ENCODE measurements at regions of chr6 and their contacts with region 1.

Region 1: GRCh38 chr6:33276864-33277662 is at the start of gene B3GALT4:
- DNase-seq: peak; percentile 72 to 84 (median 81)
- H3K4me3 ChIP-seq: peak within 1 kb of the TSS; percentile 59 to 88 (median 72)
- H3K27ac ChIP-seq: peak within 1 kb of the TSS; percentile 50 to 77
- H3K4me1 ChIP-seq: peaks cover 7 to 73% (median 63%) of the 10 kb centered on the region in 4 experiments
- H3K27me3 ChIP-seq: no peaks in the 10 kb centered on the region

Region 2: DNA sequence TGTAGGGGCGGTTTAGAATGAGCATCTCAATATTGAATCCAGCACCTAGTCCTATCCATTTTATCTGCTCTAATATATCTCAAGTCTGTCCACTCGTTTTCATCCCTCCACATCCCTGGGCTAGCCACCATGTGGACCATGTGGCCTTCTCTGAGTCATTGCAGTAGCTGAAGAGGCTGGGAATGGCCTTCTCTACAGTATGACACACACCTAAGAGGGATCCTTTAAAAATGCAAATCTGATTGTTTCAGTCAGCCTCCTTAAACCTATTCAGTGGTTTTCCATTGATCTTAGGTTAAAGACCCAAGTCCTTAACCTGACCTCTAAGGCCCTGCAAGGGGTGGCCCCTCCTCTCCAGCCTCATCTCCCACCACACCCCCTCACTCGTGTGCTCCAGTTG is 59.4 kb before region 1 on chr6:
- CTCF ChIA-PET with region 1: no interaction called
- POLR2A ChIA-PET with region 1: no interaction called
- DNase-seq: no peak
- H3K4me3 ChIP-seq: no peak overlapping the region
- H3K27ac ChIP-seq: no peak overlapping the region
- H3K4me1 ChIP-seq: peaks cover 3 to 16% (median 14%) of the 10 kb centered on the region in 4 experiments
- H3K27me3 ChIP-seq: peaks cover 0 to 3% (median 2%) of the 10 kb centered on the region in 5 experiments

Region 3: GRCh38 chr6:33288921-33289748 is 12.1 kb after region 1 on chr6 and contains the starts of genes PFDN6 and WDR46:
- CTCF ChIA-PET with region 1: interaction called, 53 read pairs
- POLR2A ChIA-PET with region 1: interaction called, 9 read pairs
- DNase-seq: peak; percentile 92 to 97 (median 96)
- H3K4me3 ChIP-seq: peak within 1 kb of the TSS; percentile 71 to 98 (median 84)
- H3K27ac ChIP-seq: peak within 1 kb of the TSS; percentile 64 to 93
- H3K4me1 ChIP-seq: peaks cover 0 to 31% (median 23%) of the 10 kb centered on the region in 4 experiments
- H3K27me3 ChIP-seq: no peaks in the 10 kb centered on the region

Region 4: DNA sequence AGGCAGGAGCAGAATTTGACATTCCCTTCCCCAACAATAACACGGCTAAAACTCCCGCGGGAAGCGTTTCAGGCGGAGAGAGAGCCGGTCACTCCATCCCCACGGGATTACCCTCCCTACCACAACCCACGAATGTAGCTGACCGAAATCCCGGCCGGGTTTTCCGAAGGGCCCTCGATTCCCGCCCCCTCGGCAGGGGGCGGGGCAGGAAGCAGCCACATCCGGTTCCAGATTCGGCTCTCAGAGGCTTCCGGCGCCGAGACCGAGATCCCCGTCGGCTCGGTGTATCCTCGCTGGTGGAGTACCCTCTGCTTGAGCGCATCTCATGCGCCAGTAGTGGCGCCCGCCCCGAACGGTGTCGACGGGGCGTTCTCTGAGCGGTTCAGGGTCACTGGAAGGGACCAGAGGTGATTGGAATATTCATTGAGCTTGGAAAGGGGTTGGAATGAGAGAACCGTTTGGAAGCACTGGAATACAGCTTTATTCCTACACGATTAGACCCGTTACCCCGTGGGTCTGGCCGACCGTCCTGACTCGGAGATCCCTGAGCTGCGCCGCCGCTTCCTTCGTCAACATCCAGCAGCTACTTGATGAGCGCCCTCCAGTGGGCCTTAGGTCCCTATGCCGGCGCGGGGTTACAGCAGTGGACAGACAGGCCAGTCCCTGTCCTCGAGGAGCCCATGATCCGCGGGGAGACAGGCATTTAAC is 22.3 kb after region 1 on chr6:
- CTCF ChIA-PET with region 1: interaction called, 96 read pairs
- POLR2A ChIA-PET with region 1: interaction called, 14 read pairs
- DNase-seq: peak; percentile 92 to 97 (median 97)
- H3K4me3 ChIP-seq: peak overlapping the region; percentile 62 to 94 (median 87)
- H3K27ac ChIP-seq: peak overlapping the region; percentile 81 to 93
- H3K4me1 ChIP-seq: peaks cover 0 to 31% (median 27%) of the 10 kb centered on the region in 4 experiments
- H3K27me3 ChIP-seq: no peaks in the 10 kb centered on the region

Region 5: DNA sequence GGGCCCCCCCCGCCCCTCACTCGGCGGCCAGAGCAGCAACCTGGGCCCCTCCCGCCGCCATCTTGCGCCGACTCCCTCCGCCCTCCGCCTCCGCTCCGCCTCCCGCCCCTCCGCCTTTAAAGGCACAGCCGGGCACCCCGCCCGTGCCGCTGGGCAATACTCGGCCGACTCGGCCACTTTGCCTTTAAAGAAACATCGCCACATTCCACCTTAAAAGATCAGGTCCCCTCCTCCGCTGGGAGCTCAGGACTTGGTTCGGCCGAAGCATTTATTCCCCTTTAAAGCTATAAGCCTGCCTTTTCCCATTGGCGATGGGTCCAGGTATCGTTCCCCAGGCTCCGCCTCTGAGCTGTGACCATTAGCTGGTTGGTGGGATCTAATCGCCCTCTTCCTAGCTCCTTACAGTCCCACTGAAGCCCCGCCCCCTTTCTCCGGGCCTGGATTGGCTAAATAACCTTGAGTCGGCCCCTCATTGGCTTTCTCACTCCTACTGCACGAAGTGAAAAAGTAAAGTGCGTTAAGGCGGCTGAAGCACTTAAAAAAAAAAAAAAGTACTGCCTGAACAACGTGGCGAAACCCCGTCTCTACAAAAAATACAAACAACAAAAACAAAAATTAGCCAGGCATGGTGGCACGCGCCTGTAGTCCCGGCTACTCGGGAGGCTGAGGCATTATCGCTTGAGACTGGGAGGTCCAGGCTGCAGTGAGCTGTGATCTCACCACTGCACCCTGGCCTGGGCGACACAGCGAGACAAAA is 40.8 kb after region 1 on chr6 and contains the start of gene ZBTB22:
- CTCF ChIA-PET with region 1: interaction called, 13 read pairs
- POLR2A ChIA-PET with region 1: interaction called, 7 read pairs
- DNase-seq: peak; percentile 99 to 100 (median 99)
- H3K4me3 ChIP-seq: peak within 1 kb of the TSS; percentile 72 to 91 (median 84)
- H3K27ac ChIP-seq: peak within 1 kb of the TSS; percentile 50 to 84
- H3K4me1 ChIP-seq: peaks cover 3 to 73% (median 46%) of the 10 kb centered on the region in 4 experiments
- H3K27me3 ChIP-seq: no peaks in the 10 kb centered on the region

Region 6: GRCh38 chr6:33344701-33345697 is 67.9 kb after region 1 on chr6:
- CTCF ChIA-PET with region 1: interaction called, 12 read pairs
- POLR2A ChIA-PET with region 1: no interaction called
- DNase-seq: peak; percentile 88 to 93 (median 92)
- H3K4me3 ChIP-seq: peak overlapping the region in 6 of 7 experiments; percentile 25 to 69 (median 49)
- H3K27ac ChIP-seq: peak overlapping the region; percentile 73 to 77
- H3K4me1 ChIP-seq: peaks cover 13 to 23% (median 21%) of the 10 kb centered on the region in 4 experiments
- H3K27me3 ChIP-seq: no peaks in the 10 kb centered on the region

Region 7: GRCh38 chr6:33407132-33407718 is 130.2 kb after region 1 on chr6:
- CTCF ChIA-PET with region 1: interaction called, 14 read pairs
- POLR2A ChIA-PET with region 1: interaction called, 3 read pairs
- DNase-seq: peak; percentile 66 to 85 (median 75)
- H3K4me3 ChIP-seq: no peak overlapping the region
- H3K27ac ChIP-seq: peak overlapping the region in 1 of 2 experiments; percentile 7
- H3K4me1 ChIP-seq: peaks cover 4 to 22% (median 15%) of the 10 kb centered on the region in 4 experiments
- H3K27me3 ChIP-seq: no peaks in the 10 kb centered on the region

Measured in common myeloid progenitor, CD34-positive (primary cell).